ENCODE measurements at regions of chr5 and their contacts with region 1.

Region 1: GRCh38 chr5:163564321-163564938 is 59.0 kb downstream of the MAT2B start:
- DNase-seq: peak; percentile 85
- H3K4me3 Mint-ChIP-seq: no peak overlapping the region
- H3K27ac Mint-ChIP-seq: no peak overlapping the region
- H3K4me1 Mint-ChIP-seq: peaks cover 37% of the 10 kb centered on the region
- H3K27me3 Mint-ChIP-seq: no peaks in the 10 kb centered on the region
- CTCF ChIP-seq: peak; percentile 87

Region 2: DNA sequence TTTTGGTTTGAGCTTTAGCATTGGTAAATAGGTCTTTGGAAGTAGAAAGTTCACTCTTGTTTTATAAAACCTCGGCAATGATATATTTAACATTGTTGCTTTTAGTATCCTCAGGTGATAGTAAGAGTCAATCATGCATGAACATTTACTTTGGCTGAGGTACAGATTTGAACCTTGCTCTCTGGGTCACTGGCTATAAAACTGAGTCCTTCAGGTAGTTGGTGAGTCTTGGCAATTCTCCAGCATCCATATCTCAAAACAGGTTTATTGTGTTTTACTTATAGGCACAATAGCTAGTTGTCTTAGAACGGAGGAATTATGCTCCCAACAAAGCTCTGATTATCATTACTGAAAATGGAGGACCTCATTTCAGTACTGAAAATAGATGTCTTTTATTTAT is 16.1 kb after region 1 on chr5:
- CTCF ChIA-PET with region 1: interaction called, 15 read pairs
- POLR2A ChIA-PET with region 1: interaction called, 3 read pairs
- intact Hi-C with region 1: no loop called
- DNase-seq: no peak
- H3K4me3 Mint-ChIP-seq: no peak overlapping the region
- H3K27ac Mint-ChIP-seq: no peak overlapping the region
- H3K4me1 Mint-ChIP-seq: peaks cover 16% of the 10 kb centered on the region
- H3K27me3 Mint-ChIP-seq: no peaks in the 10 kb centered on the region
- CTCF ChIP-seq: no peak

Region 3: GRCh38 chr5:163695830-163696578 is 131.6 kb after region 1 on chr5:
- CTCF ChIA-PET with region 1: interaction called, 86 read pairs
- POLR2A ChIA-PET with region 1: no interaction called
- intact Hi-C with region 1: loop called (anchors 1 kb)
- DNase-seq: peak; percentile 90
- H3K4me3 Mint-ChIP-seq: no peak overlapping the region
- H3K27ac Mint-ChIP-seq: no peak overlapping the region
- H3K4me1 Mint-ChIP-seq: peaks cover 8% of the 10 kb centered on the region
- H3K27me3 Mint-ChIP-seq: no peaks in the 10 kb centered on the region
- CTCF ChIP-seq: peak; percentile 98

Region 4: DNA sequence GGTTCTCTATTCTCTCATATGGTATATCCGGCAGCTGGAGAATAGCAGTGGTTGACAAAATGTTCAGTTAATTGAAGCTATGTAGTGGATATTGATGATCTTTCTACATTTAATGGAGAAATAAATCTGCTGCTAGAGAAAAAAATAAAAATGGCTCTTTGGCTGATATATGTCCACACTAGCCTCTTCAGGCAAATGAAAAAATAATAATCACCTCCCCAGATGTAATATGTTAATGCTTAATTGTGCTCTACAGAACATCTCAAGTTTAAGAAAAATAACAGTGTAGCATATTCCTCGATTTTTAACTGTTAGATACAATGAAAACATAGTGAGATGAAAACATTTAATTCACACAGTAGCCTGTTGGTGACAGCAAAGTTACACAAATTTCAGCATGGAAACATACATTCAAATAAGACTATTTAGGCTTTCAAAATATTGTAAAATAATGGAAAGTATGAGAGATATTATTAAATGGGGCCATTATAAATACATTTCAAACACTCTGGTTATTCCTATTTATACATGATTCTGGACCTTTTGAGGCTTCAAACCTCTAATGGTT is 484.0 kb after region 1 on chr5:
- CTCF ChIA-PET with region 1: interaction called, 3 read pairs
- POLR2A ChIA-PET with region 1: no interaction called
- intact Hi-C with region 1: loop called (anchors 1 kb)
- DNase-seq: peak; percentile 45
- H3K4me3 Mint-ChIP-seq: no peak overlapping the region
- H3K27ac Mint-ChIP-seq: no peak overlapping the region
- H3K4me1 Mint-ChIP-seq: no peaks in the 10 kb centered on the region
- H3K27me3 Mint-ChIP-seq: no peaks in the 10 kb centered on the region
- CTCF ChIP-seq: peak; percentile 61

Region 5: DNA sequence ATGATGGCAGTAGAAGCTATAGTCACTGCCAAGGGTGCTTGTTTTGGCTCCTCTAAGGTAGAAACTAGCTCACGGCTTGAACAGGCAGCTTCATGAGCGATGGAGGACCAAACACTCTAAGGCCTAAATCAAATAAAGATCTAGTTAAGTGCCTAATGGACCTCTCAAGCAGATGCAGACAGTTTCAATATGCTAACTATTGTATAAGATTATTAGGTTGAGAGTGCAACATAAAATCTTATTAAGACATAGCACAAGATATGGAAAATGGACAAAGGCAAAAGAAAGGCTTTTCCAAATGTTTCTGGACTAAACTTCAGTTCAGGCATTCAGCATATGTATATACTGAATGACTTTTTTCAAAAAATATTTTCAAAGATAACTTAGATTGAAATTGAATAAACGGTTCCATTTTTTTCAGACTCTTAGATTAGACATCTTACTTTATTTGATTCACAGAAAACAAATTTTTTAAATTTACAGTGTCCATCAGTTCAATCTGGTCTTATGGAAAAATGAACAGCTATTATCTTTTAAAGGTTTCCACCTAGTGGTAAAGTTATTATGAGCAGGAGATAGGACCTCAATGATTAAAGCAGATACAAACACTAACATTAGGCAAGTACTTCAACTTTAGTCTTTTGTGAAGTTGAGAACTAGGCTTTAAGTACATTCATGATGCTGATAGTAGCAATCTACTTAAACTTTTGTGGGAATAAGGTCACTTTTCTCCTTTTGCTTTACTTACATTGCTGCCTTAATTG is 1108.7 kb after region 1 on chr5:
- CTCF ChIA-PET with region 1: interaction called, 4 read pairs
- POLR2A ChIA-PET with region 1: no interaction called
- intact Hi-C with region 1: loop called (anchors 1 kb)
- DNase-seq: peak; percentile 42
- H3K4me3 Mint-ChIP-seq: no peak overlapping the region
- H3K27ac Mint-ChIP-seq: no peak overlapping the region
- H3K4me1 Mint-ChIP-seq: no peaks in the 10 kb centered on the region
- H3K27me3 Mint-ChIP-seq: no peaks in the 10 kb centered on the region
- CTCF ChIP-seq: peak; percentile 54